Activated naive CD4-positive, alpha-beta T cell treated with anti-CD3 and anti-CD28 coated beads for 36 hours (primary cell): ENCODE measurements at regions of chr22 and their contacts with region 1.

Region 1: DNA sequence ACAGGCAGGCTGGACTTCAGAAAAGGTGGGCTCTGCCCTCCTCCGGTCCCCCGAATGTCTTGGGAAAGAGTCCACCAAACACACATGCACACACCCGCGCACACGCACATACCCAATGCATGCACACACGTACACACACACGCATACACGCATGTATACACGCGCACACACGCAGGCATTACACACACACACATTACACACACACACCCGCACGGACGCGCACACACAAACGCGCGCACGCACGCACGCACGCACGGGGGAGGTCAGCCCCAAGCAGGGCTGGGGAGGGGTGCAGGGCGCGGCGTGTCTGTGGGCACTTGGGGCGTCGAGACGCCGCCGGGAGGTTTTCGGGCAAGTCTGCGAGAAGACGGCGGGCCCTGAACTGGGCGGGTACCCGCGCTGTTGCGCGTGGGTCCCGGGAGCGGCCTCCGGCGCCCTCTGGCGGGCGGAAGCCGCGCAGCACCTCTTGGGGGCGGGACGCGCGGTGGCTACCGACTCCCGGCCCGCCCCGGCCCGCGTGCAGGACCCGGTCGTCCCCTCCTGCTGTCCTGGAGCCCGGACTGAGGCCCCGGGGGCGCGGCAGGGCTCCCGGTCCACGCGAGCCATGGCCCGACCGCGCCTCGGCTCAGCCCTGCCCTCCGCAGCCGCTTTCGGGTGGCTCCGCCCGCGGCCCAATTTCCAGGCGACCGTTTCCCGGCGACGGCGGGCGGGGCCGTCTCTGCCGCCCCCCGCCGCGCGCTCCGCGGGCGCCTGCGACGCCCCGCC is 3.6 kb downstream of the SEPTIN5 start:
- DNase-seq: peak; percentile 77
- H3K4me3 Mint-ChIP-seq: peak overlapping the region; percentile 70
- H3K27ac Mint-ChIP-seq: no peak overlapping the region
- H3K4me1 Mint-ChIP-seq: peaks cover 9% of the 10 kb centered on the region
- H3K27me3 Mint-ChIP-seq: peaks cover 41% of the 10 kb centered on the region

Region 2: GRCh38 chr22:19143967-19144400 is 573.9 kb before region 1 on chr22:
- CTCF ChIA-PET with region 1: interaction called, 3 read pairs
- intact Hi-C with region 1: loop called (anchors 1 kb)
- DNase-seq: peak; percentile 50
- H3K4me3 Mint-ChIP-seq: peak overlapping the region; percentile 99
- H3K27ac Mint-ChIP-seq: peak overlapping the region; percentile 91
- H3K4me1 Mint-ChIP-seq: peaks cover 19% of the 10 kb centered on the region
- H3K27me3 Mint-ChIP-seq: peaks cover 13% of the 10 kb centered on the region

Region 3: GRCh38 chr22:19679522-19680101 is 38.3 kb before region 1 on chr22:
- CTCF ChIA-PET with region 1: interaction called, 4 read pairs
- intact Hi-C with region 1: loop called (anchors 2 kb)
- DNase-seq: peak; percentile 39
- H3K4me3 Mint-ChIP-seq: no peak overlapping the region
- H3K27ac Mint-ChIP-seq: no peak overlapping the region
- H3K4me1 Mint-ChIP-seq: peaks cover 2% of the 10 kb centered on the region
- H3K27me3 Mint-ChIP-seq: peaks cover 9% of the 10 kb centered on the region

Region 4: GRCh38 chr22:19707347-19708290 is 10.3 kb before region 1 on chr22:
- CTCF ChIA-PET with region 1: no interaction called
- intact Hi-C with region 1: no loop called
- DNase-seq: peak; percentile 3
- H3K4me3 Mint-ChIP-seq: no peak overlapping the region
- H3K27ac Mint-ChIP-seq: no peak overlapping the region
- H3K4me1 Mint-ChIP-seq: no peaks in the 10 kb centered on the region
- H3K27me3 Mint-ChIP-seq: no peaks in the 10 kb centered on the region

Region 5: GRCh38 chr22:19772422-19773324 is 54.8 kb after region 1 on chr22:
- CTCF ChIA-PET with region 1: no interaction called
- intact Hi-C with region 1: no loop called
- DNase-seq: no peak
- H3K4me3 Mint-ChIP-seq: no peak overlapping the region
- H3K27ac Mint-ChIP-seq: no peak overlapping the region
- H3K4me1 Mint-ChIP-seq: peaks cover 6% of the 10 kb centered on the region
- H3K27me3 Mint-ChIP-seq: peaks cover 52% of the 10 kb centered on the region